ENCODE measurements at regions of chr15 and their contacts with region 1.

Region 1: GRCh38 chr15:82809404-82810060 is at the start of gene WHAMM:
- DNase-seq: peak; percentile 98
- total RNA-seq, gene WHAMM: 5.4 and 7.0 TPM in 2 replicates

Region 2: GRCh38 chr15:82554351-82554750 is 255.2 kb before region 1 on chr15:
- in situ Hi-C with region 1: no loop called
- DNase-seq: no peak

Region 3: DNA sequence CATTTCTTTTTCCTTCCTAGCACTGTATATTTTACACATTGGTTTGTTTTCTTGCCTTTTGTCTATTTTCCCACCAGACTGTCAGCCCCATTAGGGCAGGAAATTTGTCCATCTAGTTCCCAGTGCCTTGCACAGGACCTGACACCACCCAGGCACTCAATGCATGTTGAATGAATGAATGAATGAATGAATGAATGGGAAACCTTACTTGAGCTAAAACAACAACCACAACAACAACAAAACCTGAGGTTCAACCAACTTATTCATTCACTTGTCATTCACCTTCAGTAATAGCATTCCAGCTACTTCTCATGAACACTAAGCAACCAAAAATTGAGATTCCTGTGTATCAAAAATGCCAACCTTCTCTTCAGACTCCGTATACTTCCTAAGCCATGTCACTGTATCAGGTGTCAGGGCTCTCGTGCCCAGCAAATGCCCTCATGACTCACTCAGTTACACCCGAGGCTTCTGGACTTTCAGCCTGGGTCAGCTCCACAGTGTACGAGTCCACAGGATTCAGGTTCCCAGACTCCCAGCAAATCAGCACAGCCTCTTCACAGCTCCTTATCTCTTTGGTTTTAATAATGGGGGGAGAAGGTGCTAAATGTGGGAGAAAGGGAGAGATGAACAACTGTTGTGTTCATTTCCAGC is 41.0 kb before region 1 on chr15:
- in situ Hi-C with region 1: no loop called
- DNase-seq: peak; percentile 18

Region 4: GRCh38 chr15:82862886-82863285 is 53.4 kb after region 1 on chr15:
- in situ Hi-C with region 1: loop called (anchors 10 kb)
- DNase-seq: no peak

Region 5: DNA sequence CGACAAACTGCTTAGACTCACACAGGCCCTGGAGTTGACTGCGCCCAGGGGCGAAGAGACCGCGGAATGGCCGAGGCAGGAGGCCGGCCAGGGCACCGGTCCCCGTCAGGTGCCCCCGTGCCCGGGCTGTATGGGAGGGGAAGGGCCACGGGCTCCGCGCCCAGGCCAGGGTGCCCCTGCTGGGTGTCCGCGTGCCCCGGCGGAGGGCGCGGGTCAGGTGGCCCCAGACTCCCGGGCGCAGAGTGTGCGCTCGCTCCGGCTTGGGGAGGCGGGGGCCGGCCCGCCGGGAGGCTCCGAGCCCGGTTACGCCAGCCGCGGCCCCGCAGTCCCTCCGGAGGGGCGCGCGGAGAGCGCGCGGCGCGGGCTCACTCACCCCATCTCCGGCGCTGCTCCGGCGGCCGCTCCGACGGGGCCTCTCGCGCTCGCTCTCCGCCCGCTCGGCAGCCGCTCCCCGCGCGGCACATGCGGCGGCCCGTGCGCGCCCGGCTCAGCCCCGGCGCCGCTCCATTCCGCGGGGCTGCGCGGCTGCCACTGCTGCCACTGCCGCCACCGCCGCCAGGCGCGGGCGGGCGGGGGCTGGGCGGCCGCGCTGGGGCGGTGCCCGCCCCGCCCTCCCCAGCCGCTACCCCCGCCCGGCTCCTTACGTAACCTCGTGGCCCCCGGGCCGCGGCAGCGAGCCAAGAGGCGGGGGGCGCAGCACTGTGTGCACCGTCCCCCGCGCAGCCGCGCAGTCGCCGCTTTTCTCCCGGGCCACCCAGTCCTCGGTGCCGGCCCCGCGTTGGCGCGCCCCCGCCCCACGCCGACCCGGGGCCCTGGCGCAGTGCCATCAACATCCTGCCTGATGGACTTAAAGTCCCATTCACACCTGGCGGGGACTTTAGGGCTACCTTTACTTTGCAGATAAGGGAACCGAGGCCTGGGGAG is 142.9 kb after region 1 on chr15 and contains the start of gene HOMER2:
- in situ Hi-C with region 1: no loop called
- DNase-seq: peak; percentile 25
- total RNA-seq, gene HOMER2: 22.1 and 34.2 TPM in 2 replicates

Measured in Caki2 (cell line).